Keratinocyte (primary cell): ENCODE measurements at regions of chr9 and their contacts with region 1.

Region 1: DNA sequence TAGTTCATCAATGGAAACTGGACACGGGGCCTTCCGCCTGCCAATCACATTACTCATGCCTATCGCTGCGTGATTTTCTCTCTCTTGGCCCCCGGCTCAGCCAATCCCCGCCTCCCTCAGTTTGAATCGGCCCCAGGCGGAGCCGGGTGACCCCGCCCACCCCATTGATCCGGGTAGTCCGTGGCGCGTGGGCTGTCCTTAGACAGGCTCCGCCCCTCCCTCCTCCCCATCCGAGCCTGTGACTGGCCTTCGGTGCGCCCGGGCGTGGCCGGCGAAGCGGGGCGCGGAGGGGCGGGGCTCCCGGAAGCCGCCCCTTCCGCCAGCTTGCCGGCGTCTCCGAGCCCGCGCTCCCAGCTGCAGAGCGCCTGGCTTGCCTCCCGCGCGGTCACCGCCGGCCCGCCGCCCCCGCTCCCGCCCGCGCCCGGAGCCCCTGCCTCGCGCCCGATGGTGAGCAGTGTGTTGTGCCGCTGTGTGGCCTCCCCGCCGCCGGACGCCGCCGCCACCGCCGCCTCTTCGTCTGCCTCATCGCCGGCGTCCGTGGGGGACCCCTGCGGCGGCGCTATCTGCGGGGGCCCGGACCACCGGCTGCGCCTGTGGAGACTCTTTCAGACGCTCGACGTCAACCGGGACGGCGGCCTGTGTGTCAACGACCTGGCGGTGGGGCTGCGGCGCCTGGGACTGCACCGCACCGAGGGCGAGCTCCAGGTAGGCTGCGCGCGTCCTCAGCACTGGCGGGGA is at the start of gene SLC25A25:
- DNase-seq: peak; percentile 95
- H3K4me3 ChIP-seq: peak within 1 kb of the TSS; percentile 77 to 97 (median 90)
- H3K27ac ChIP-seq: peak within 1 kb of the TSS; percentile 99
- H3K4me1 ChIP-seq: peaks cover 31% of the 10 kb centered on the region
- H3K27me3 ChIP-seq: no peaks in the 10 kb centered on the region
- CTCF ChIP-seq: no peak
- polyA plus RNA-seq, gene SLC25A25: 4.1 to 7.9 TPM (median 6.5 TPM) in 3 replicates

Region 2: GRCh38 chr9:127937388-127938280 is 130.4 kb before region 1 on chr9 and contains the start of gene DPM2:
- dilution Hi-C with region 1: loop called (anchors 25 kb)
- DNase-seq: no peak
- H3K4me3 ChIP-seq: peak within 1 kb of the TSS; percentile 72 to 87 (median 78)
- H3K27ac ChIP-seq: peak within 1 kb of the TSS; percentile 61
- H3K4me1 ChIP-seq: peaks cover 22% of the 10 kb centered on the region
- H3K27me3 ChIP-seq: no peaks in the 10 kb centered on the region
- CTCF ChIP-seq: no peak
- polyA plus RNA-seq, gene DPM2: 31.1 to 35.4 TPM (median 34.7 TPM) in 3 replicates

Region 3: DNA sequence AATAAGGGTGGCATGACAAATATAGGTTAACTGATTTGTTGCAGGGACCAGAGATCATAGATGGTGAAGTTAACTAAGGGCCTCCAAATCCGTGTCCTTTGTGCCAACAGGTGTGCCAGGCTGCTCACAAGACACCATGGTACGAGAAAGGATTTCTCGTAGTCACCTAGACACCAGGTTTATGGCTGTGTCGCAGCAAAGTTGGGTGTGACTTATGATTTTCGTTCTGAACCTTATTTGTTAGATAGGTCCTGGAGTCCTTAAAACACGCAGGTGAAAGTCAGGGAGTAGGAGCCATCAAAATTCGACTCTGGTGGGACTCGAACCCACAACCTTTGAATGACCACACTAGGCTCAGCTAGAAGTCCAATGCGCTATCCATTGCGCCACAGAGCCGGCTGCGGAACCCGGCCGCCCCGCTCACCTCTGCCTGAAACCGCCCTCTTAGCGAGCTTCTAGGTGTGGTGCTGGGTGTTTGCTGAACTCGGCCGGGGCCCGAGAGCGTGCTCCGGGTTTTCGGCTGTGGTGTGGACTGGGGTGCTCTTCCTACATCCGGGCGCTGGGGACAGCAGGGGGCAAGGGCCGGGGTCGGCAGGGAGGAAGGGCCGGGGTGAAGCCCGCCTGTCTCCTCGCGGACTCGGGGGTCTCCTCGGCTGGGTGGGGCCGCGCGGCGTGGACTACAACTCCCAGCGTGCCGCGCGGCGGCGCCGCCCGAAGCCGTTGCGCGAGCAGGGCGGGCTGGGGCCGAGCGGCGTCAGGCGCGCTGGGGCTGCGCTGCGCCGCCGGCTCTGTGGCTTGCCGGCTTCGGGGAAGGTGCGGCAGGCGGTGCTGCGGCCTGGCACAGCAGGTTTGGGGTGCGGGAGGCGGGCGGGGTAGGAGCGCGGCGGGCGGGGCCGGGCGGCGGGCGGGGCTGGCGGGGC is 272.0 kb after region 1 on chr9 and contains the start of gene SLC27A4:
- dilution Hi-C with region 1: no loop called
- DNase-seq: peak; percentile 90
- H3K4me3 ChIP-seq: peak within 1 kb of the TSS; percentile 89 to 95 (median 90)
- H3K27ac ChIP-seq: peak within 1 kb of the TSS; percentile 74
- H3K4me1 ChIP-seq: no peaks in the 10 kb centered on the region
- H3K27me3 ChIP-seq: no peaks in the 10 kb centered on the region
- CTCF ChIP-seq: no peak
- polyA plus RNA-seq, gene SLC27A4: 17.3 to 30.2 TPM (median 21.4 TPM) in 3 replicates